Pancreas (tissue), 10 donors: ENCODE measurements at regions of chr3 and their contacts with region 1.

Region 1: DNA sequence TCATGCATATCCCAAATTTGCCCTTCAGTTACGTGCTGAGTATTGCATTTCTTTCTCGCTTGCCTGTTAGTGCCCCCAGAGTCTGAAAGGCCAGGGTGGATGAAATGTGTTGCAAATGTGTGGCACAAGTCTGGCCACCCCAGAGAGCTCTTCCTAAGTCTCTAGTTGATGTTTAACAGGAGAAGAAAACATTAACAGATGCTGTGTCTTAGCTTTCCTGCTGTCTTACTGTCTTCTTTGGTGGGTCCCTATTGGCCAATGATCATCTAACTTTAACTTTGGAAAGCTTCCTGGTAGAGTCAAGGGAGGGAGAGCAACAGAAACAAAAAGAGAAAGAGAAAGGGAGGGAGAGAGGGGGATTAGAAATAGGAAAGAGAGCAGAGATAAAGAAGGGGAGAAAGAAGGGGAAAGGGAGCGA is 76.7 kb upstream of the P3H2 start:
- DNase-seq: no peak
- ATAC-seq: no peak
- H3K4me3 ChIP-seq: no peak overlapping the region
- H3K27ac ChIP-seq: no peak overlapping the region
- H3K4me1 ChIP-seq: peaks cover 0 to 3% (median 0%) of the 10 kb centered on the region in 3 donors
- H3K27me3 ChIP-seq: no peaks in the 10 kb centered on the region
- CTCF ChIP-seq: no peak

Region 2: DNA sequence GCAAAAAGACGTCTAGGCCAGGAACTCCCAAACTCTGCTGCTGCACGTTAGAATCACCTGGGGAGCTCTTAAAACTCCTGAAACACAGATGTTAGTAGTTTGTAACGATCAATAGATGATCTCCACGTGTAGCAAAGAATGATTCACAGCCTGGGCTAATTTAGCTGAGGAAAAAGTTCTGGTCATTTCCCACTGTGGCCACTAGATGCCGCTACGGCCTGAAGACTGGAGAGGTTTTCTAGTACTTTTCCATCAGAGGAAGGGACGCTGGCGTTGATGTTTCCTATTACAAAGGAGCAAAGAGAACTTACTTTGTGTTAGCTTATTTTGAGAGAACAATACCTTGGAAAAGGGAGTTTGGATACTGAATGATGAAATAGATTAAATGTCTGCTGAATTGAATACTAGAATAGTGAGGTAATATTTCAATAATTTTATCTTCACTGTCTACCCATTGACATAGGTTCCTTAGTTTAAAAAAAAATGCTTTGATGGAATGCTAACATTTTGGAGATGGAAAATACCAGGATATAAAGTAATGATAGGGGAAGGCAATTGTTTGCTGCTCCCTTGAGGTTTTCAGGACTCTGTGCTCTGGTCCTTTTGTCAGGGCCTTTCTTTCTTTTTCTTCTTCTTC is 235.7 kb before region 1 on chr3:
- intact Hi-C with region 1: loop called in 2 of 3 experiments (anchors 10 kb)
- DNase-seq: peak; percentile 48 to 85 (median 62)
- ATAC-seq: peak; percentile 88 to 98 (median 95)
- H3K4me3 ChIP-seq: no peak overlapping the region
- H3K27ac ChIP-seq: no peak overlapping the region
- H3K4me1 ChIP-seq: no peaks in the 10 kb centered on the region
- H3K27me3 ChIP-seq: no peaks in the 10 kb centered on the region
- CTCF ChIP-seq: peak; percentile 68 to 88 (median 76)

Region 3: DNA sequence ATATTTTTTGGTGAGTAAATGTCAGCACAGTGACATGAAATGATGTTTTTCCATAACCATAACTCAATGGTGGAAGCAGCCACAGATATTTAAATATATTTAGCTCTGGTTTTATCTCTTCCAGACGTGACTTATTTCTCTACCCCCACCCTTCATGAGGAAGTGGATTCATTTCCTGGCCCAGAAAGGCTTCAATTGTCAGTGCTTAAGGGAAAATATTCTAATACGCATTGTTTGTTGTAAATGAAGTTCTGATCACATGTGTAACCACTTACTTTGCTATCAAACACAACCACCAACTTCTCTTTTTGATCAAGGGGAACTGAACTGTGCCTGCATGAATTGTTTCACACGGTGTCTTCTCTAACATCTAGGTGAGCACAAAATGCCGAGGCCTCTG is 204.6 kb after region 1 on chr3:
- intact Hi-C with region 1: no loop called
- DNase-seq: no peak
- ATAC-seq: no peak
- H3K4me3 ChIP-seq: no peak overlapping the region
- H3K27ac ChIP-seq: no peak overlapping the region
- H3K4me1 ChIP-seq: no peaks in the 10 kb centered on the region
- H3K27me3 ChIP-seq: no peaks in the 10 kb centered on the region
- CTCF ChIP-seq: no peak